Activated T-helper 1 cell treated with anti-CD3 and anti-CD28 coated beads, Interleukin-12 subunit alpha, Interleukin-12 subunit beta, Interleukin-2, Interleukin-4 antibody, amounts not matched to agents 30 ng/mL and 10 ng/mL and 1 ng/mL, durations not matched to agents 14 hours and 24 hours and 36 hours (primary cell): ENCODE measurements at regions of chr20 and their contacts with region 1.

Region 1: GRCh38 chr20:33554914-33555420 is 65.1 kb downstream of the CBFA2T2 start:
- DNase-seq: peak; percentile 47
- H3K4me3 Mint-ChIP-seq: peak overlapping the region; percentile 20
- H3K27ac Mint-ChIP-seq: peak overlapping the region; percentile 85
- H3K4me1 Mint-ChIP-seq: peaks cover 15% of the 10 kb centered on the region
- H3K27me3 Mint-ChIP-seq: no peaks in the 10 kb centered on the region

Region 2: DNA sequence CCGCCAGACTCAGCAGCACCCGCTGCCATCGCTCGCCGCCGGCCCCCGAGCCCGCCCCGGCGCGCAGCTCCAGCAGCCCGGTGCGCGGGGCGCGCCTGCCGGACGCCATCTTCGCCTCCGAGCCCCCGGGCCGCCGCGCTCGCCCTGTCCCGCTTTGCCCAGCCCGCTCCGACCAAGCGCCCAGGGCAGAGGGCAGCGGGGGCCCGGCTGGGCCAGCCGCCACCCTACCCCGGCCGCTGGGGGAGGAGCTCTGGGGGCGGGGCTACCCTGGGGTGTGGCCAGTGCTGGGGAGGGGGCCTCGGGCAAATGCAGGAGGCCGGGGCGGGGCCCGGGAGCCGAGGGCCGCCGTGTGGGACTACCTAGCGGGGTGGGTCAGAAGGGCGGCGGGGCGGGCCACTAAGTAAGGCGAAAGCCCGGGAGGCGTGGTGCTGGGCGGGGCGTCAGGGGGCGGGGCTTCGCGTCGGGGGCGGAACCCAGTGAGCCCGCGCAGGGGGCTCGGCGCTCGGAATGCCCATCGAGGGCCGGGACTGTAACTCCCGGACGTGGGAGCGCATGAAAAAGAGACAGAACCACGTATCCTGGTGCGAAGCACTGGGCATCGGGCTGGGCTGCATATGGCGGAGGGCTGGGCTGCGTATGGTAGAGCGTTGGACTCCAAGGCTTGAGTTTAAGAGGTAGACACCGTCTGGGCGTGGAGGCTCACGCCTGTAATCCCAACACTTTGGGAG is 111.3 kb before region 1 on chr20 and contains the start of gene SNTA1:
- intact Hi-C with region 1: loop called (anchors 5 kb)
- DNase-seq: peak; percentile 82
- H3K4me3 Mint-ChIP-seq: peak within 1 kb of the TSS; percentile 88
- H3K27ac Mint-ChIP-seq: peak within 1 kb of the TSS; percentile 76
- H3K4me1 Mint-ChIP-seq: peaks cover 10% of the 10 kb centered on the region
- H3K27me3 Mint-ChIP-seq: peaks cover 11% of the 10 kb centered on the region
- total RNA-seq, gene SNTA1: 0.76 and 0.91 TPM in 2 replicates

Region 3: DNA sequence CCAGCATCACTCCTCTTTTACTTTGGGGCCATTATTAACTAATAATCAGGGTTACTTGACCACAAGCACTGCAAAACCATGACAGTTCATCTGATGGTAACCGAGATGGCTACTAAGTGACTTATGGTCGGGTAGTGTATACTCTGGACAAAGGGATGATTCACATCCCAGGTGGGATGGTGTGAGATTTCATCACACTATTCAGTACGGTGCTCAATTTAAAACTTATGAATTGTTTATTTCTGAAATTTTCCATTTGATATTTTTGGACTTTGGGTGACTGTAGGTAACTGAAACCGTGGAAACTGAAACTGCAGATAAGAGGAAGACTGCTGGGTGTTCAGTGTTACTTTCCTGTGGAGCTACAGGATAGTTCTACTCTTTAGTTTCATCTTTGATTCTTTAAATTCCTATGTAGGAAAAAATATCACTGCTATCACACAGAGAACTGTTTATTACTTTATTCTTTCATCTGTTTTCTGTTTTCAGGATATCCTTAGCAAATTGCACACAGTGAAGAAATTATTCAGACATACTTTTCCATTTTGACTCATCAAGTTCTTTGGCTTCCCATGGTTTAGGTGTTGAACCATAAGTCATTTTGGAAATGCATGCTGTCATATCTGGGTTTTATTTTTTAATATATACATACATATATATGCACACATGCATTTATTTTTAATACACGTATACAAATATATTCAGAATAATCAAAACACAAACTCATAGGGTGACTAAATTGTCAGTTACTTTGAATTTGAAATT is 48.0 kb after region 1 on chr20:
- intact Hi-C with region 1: loop called (anchors 1 kb)
- DNase-seq: no peak
- H3K4me3 Mint-ChIP-seq: no peak overlapping the region
- H3K27ac Mint-ChIP-seq: peak overlapping the region; percentile 41
- H3K4me1 Mint-ChIP-seq: peaks cover 25% of the 10 kb centered on the region
- H3K27me3 Mint-ChIP-seq: no peaks in the 10 kb centered on the region

Region 4: DNA sequence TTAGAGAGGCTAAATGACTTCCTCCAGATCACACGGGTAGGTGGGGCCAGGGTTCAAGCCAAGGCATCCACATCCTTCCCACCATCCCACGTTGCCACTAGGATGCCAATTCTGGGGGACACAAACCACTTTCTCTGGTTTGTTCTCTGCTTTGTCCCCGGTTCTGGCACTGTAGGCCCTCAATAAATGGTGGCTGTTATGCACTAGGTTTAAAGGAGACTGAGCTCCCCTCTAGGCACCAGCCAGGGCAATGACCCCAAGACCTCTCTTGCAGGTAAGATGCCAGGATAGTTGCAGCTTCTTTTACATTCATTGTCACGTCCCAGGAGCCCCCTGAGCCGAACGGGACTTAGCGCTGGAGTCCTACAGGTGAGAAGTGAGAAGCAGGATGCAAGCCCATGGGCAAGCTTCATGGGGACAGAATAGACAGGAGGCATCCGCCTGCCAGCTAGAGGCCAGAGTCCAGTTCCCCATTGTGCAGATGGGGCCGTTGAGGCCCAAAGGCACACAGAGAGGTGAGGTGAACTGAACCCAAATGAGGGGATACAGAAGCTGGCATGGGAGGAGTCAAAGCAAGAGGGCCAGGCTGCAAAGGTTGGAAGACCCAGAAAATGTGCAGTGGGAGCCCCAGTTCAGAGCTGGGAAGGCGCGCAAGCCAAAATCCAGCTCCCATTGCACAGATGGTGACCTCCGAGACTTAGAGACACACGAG is 164.5 kb after region 1 on chr20:
- intact Hi-C with region 1: no loop called
- DNase-seq: no peak
- H3K4me3 Mint-ChIP-seq: peak overlapping the region; percentile 85
- H3K27ac Mint-ChIP-seq: peak overlapping the region; percentile 93
- H3K4me1 Mint-ChIP-seq: peaks cover 30% of the 10 kb centered on the region
- H3K27me3 Mint-ChIP-seq: no peaks in the 10 kb centered on the region

Region 5: DNA sequence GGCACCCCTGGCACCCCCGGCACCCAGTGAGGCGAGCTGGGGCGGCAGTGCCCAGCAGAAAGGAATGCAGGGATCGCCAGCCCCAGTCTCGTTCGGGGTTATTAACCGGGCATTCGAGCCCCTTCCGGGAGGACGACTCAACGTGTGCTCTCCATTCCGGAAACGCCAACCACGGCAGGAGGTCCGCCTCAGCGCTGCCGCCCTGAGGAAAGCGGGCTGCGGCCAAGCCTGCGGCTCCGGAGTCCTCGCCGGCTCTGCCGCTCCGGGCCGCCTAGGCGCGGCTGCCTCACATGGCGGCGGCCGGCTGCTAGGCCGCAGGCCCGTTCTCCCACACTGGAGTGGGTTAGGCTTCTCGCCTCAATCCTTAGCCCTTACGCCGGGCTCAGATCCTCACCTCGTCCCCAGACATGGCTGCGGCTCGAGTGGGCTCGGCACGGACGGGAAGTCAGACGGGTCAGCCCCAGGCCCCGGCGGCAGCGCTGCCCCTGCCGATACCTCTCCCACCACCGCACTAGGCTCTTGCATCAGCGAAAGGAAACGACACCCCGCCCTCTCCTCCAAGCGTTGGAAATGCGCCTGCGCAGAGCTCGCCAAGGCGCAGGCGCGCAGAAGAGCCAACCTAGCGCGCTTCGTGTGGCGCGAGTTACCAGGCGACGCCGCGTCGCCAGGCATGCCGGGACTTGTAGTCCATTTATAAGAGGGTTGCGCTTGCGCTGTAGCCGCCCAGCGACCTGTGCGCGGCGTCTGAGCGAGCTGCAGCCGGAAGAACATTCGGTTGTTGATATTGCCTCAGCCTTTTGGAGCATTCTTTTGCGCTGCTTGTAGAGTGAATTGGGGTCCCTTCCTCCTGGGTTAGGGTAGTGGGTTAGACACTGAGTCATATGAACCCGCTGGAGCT is 557.0 kb after region 1 on chr20 and contains the start of gene EIF2S2:
- intact Hi-C with region 1: loop called (anchors 5 kb)
- DNase-seq: peak; percentile 96
- H3K4me3 Mint-ChIP-seq: peak within 1 kb of the TSS; percentile 88
- H3K27ac Mint-ChIP-seq: peak within 1 kb of the TSS; percentile 98
- H3K4me1 Mint-ChIP-seq: peaks cover 46% of the 10 kb centered on the region
- H3K27me3 Mint-ChIP-seq: peaks cover 1% of the 10 kb centered on the region
- total RNA-seq, gene EIF2S2: 99.8 and 105 TPM in 2 replicates